Body of pancreas (tissue), 4 donors: ENCODE measurements at regions of chr1 and their contacts with region 1.

Region 1: GRCh38 chr1:16184309-16185303 is 27.8 kb downstream of the ARHGEF19 start:
- DNase-seq: no peak
- ATAC-seq: no peak
- H3K4me3 ChIP-seq: no peak overlapping the region
- H3K27ac ChIP-seq: no peak overlapping the region
- H3K4me1 ChIP-seq: peaks cover 25% of the 10 kb centered on the region
- H3K27me3 ChIP-seq: no peaks in the 10 kb centered on the region
- CTCF ChIP-seq: no peak
- POLR2A ChIP-seq: no peak

Region 2: GRCh38 chr1:15584489-15585363 is 599.9 kb before region 1 on chr1 and contains the start of gene AGMAT:
- intact Hi-C with region 1: no loop called
- DNase-seq: peak; percentile 24 to 62 (median 38)
- ATAC-seq: peak; percentile 75
- H3K4me3 ChIP-seq: peak within 1 kb of the TSS in 1 of 2 donors; percentile 10
- H3K27ac ChIP-seq: no peak within 1 kb of the TSS
- H3K4me1 ChIP-seq: peaks cover 11% of the 10 kb centered on the region
- H3K27me3 ChIP-seq: no peaks in the 10 kb centered on the region
- CTCF ChIP-seq: peak in 4 of 7 experiments; percentile 13 to 38 (median 22)
- POLR2A ChIP-seq: no peak
- total RNA-seq, gene AGMAT: 0.33 to 0.52 TPM

Region 3: DNA sequence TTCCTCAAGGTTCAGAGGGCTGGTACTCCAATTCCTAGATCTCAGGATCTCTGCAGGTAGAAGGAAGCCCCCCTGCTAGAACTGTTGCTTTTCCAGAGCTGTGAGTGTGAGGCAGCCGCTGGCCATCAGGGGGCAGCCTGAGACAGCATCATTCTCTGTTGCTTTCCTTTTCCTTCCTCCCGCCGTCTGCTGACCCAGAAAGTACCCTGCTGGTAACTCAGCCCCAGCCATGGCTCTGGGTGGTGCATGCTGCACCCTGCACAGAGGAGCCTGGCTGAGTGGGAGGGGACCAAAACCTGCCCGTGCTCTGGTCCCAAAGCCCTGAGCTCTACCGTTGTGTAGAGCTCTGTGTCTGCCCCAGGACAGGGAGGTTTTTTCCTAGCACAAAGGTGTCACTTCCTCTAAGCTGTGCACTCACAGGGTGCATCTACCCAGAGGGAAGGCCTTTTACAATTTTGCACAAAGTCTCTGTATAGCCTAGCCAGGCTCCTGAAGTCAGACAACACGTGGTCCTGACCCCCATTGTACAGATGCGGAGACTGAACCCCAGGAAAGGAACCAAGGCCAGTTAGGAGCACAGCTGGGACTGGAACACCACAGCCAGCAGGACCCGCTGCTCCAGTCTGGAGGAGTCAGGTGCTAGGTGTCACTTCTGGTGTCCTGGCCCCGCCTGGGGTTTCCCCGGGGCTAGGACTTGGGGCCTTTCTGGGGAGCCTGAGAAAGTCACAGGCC is 105.5 kb before region 1 on chr1:
- intact Hi-C with region 1: loop called (anchors 2 kb)
- DNase-seq: peak; percentile 86 to 90 (median 86)
- ATAC-seq: peak; percentile 85
- H3K4me3 ChIP-seq: no peak overlapping the region
- H3K27ac ChIP-seq: peak overlapping the region in 2 of 4 donors; percentile 12 to 35
- H3K4me1 ChIP-seq: peaks cover 12% of the 10 kb centered on the region
- H3K27me3 ChIP-seq: no peaks in the 10 kb centered on the region
- CTCF ChIP-seq: peak; percentile 70 to 97 (median 94)
- POLR2A ChIP-seq: no peak

Region 4: GRCh38 chr1:16351994-16352841 is 167.6 kb after region 1 on chr1 and contains the start of gene FBXO42:
- intact Hi-C with region 1: no loop called
- DNase-seq: peak; percentile 90 to 92 (median 92)
- ATAC-seq: peak; percentile 97
- H3K4me3 ChIP-seq: peak within 1 kb of the TSS; percentile 77 to 97
- H3K27ac ChIP-seq: peak within 1 kb of the TSS; percentile 88 to 95 (median 92)
- H3K4me1 ChIP-seq: peaks cover 27% of the 10 kb centered on the region
- H3K27me3 ChIP-seq: no peaks in the 10 kb centered on the region
- CTCF ChIP-seq: peak in 5 of 7 experiments; percentile 26 to 72 (median 45)
- POLR2A ChIP-seq: peak; percentile 89 to 90 (median 90)
- total RNA-seq, gene FBXO42: 11.9 to 33.6 TPM

Region 5: GRCh38 chr1:16396591-16396990 is 212.0 kb after region 1 on chr1:
- intact Hi-C with region 1: no loop called
- DNase-seq: peak in 1 of 4 donors; percentile 13
- ATAC-seq: no peak
- H3K4me3 ChIP-seq: no peak overlapping the region
- H3K27ac ChIP-seq: no peak overlapping the region
- H3K4me1 ChIP-seq: peaks cover 11% of the 10 kb centered on the region
- H3K27me3 ChIP-seq: no peaks in the 10 kb centered on the region
- CTCF ChIP-seq: no peak
- POLR2A ChIP-seq: no peak

Region 6: DNA sequence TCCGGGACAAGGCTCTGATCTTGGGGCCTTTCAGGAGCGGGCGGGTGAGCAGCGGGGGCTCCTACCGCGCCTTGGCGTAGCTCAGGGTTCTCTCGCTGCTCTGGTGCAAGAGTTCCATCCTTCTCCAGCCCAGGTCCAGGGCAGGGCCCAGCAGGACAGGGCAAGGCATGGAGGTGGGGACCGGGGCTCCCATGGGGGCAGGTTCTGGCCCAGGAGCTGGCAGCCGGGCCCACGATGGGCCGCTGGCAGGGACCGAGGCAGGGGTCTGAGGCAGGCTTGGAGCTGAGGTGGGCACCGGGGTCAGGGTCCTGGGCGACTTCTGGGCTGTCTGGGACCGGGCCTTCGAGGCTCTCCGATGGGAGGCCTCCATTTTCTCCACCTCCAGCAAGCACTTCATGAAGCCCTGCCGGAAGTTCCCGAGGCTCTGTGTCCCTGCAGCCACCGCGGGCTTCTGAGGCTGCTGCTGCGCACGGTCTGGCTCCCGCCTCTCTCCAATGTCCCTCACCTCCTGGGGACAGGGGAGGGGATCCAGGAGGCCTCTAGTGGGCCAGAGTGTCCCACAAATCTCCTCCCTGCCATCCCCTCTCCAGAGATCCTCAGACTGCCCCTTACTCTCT is 225.0 kb after region 1 on chr1:
- intact Hi-C with region 1: no loop called
- DNase-seq: no peak
- ATAC-seq: no peak
- H3K4me3 ChIP-seq: no peak overlapping the region
- H3K27ac ChIP-seq: no peak overlapping the region
- H3K4me1 ChIP-seq: no peaks in the 10 kb centered on the region
- H3K27me3 ChIP-seq: no peaks in the 10 kb centered on the region
- CTCF ChIP-seq: no peak
- POLR2A ChIP-seq: no peak